WTC11 (cell line): ENCODE measurements at regions of chr16 and their contacts with region 1.

Region 1: GRCh38 chr16:28090646-28091377 is 27.3 kb upstream of the GSG1L start:
- DNase-seq: peak; percentile 88
- ATAC-seq: peak; percentile 71
- H3K4me3 Mint-ChIP-seq: no peak overlapping the region
- H3K27ac Mint-ChIP-seq: peak overlapping the region; percentile 41; the same call in 1 of the 2 replicates
- H3K4me1 Mint-ChIP-seq: peaks cover 35% of the 10 kb centered on the region
- H3K27me3 Mint-ChIP-seq: no peaks in the 10 kb centered on the region
- CTCF ChIP-seq: peak; percentile 77; the same call in 1 of the 2 replicates

Region 2: GRCh38 chr16:27639561-27640276 is 451.1 kb before region 1 on chr16:
- CTCF ChIA-PET with region 1: interaction called, 10 read pairs
- POLR2A ChIA-PET with region 1: no interaction called
- DNase-seq: peak; percentile 40
- ATAC-seq: peak; percentile 87
- H3K4me3 Mint-ChIP-seq: no peak overlapping the region
- H3K27ac Mint-ChIP-seq: no peak overlapping the region
- H3K4me1 Mint-ChIP-seq: peaks cover 25% of the 10 kb centered on the region
- H3K27me3 Mint-ChIP-seq: no peaks in the 10 kb centered on the region
- CTCF ChIP-seq: peak; percentile 46

Region 3: GRCh38 chr16:27972500-27972899 is 118.3 kb before region 1 on chr16:
- CTCF ChIA-PET with region 1: interaction called, 53 read pairs
- POLR2A ChIA-PET with region 1: no interaction called
- DNase-seq: peak; percentile 62
- ATAC-seq: peak; percentile 89
- H3K4me3 Mint-ChIP-seq: no peak overlapping the region
- H3K27ac Mint-ChIP-seq: no peak overlapping the region
- H3K4me1 Mint-ChIP-seq: no peaks in the 10 kb centered on the region
- H3K27me3 Mint-ChIP-seq: no peaks in the 10 kb centered on the region
- CTCF ChIP-seq: no peak; the same call in 1 of the 2 replicates

Region 4: GRCh38 chr16:28063641-28064061 is 27.2 kb before region 1 on chr16 and contains the start of gene GSG1L:
- CTCF ChIA-PET with region 1: interaction called, 23 read pairs
- POLR2A ChIA-PET with region 1: no interaction called
- DNase-seq: no peak
- ATAC-seq: peak; percentile 14
- H3K4me3 Mint-ChIP-seq: peak within 1 kb of the TSS; percentile 63
- H3K27ac Mint-ChIP-seq: no peak within 1 kb of the TSS
- H3K4me1 Mint-ChIP-seq: peaks cover 8% of the 10 kb centered on the region; the same call in 1 of the 2 replicates
- H3K27me3 Mint-ChIP-seq: peaks cover 61% of the 10 kb centered on the region
- CTCF ChIP-seq: no peak
- total RNA-seq, gene GSG1L: 0.21 to 0.55 TPM (median 0.28 TPM) in 3 replicates

Region 5: GRCh38 chr16:28069971-28070794 is 20.6 kb before region 1 on chr16:
- CTCF ChIA-PET with region 1: interaction called, 26 read pairs
- POLR2A ChIA-PET with region 1: no interaction called
- DNase-seq: no peak
- ATAC-seq: no peak; the same call in 1 of the 2 replicates
- H3K4me3 Mint-ChIP-seq: no peak overlapping the region
- H3K27ac Mint-ChIP-seq: no peak overlapping the region
- H3K4me1 Mint-ChIP-seq: peaks cover 11% of the 10 kb centered on the region; the same call in 1 of the 2 replicates
- H3K27me3 Mint-ChIP-seq: peaks cover 13% of the 10 kb centered on the region
- CTCF ChIP-seq: no peak

Region 6: DNA sequence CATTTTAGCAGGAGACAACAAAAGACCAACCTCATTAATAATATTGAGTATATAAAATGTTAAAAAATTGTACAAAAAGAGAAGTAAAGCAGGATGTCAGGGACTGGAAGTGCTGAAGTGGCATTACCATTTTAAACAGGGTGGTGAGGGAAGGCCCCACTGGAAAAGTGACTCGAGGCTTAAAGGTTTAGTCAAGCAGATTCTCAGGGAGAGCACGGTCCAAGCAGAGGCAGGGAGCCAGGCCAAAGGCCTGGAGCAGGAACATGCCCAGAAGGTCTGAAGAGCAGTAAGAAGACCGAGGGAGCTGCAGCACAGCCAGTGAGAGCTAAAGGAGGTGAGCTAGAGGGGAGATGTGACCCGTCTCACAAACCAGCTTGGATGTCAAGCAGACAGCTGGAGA is 113.4 kb after region 1 on chr16:
- CTCF ChIA-PET with region 1: no interaction called
- POLR2A ChIA-PET with region 1: no interaction called
- DNase-seq: no peak
- ATAC-seq: no peak
- H3K4me3 Mint-ChIP-seq: no peak overlapping the region
- H3K27ac Mint-ChIP-seq: no peak overlapping the region
- H3K4me1 Mint-ChIP-seq: peaks cover 4% of the 10 kb centered on the region
- H3K27me3 Mint-ChIP-seq: no peaks in the 10 kb centered on the region
- CTCF ChIP-seq: no peak

Region 7: DNA sequence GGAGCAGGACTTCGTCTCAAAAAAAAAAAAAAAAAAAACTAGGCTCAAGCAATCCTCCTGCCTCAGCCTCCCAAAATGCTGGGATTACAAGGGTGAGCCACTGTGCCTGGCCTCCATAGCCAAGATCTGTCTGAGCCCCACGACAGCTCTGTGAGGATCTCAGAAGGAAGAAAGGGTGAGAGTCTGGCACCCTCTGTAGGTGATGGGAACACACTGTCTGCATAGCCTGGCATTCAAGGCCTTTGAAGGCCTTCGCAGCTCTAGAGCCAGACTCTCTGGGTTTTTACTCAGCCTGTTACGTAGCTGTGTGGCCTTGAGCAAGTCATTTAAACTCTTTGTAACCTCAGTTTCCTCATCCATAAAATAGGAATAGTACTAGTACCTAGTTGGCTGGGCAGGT is 127.3 kb after region 1 on chr16:
- CTCF ChIA-PET with region 1: interaction called, 14 read pairs
- POLR2A ChIA-PET with region 1: no interaction called
- DNase-seq: peak; percentile 30
- ATAC-seq: peak; percentile 95
- H3K4me3 Mint-ChIP-seq: no peak overlapping the region
- H3K27ac Mint-ChIP-seq: no peak overlapping the region
- H3K4me1 Mint-ChIP-seq: peaks cover 7% of the 10 kb centered on the region; the same call in 1 of the 2 replicates
- H3K27me3 Mint-ChIP-seq: no peaks in the 10 kb centered on the region
- CTCF ChIP-seq: no peak